ENCODE measurements at regions of chr1 and their contacts with region 1.

Region 1: GRCh38 chr1:35882945-35883634 is at the start of gene AGO1:
- DNase-seq: peak; percentile 63
- ATAC-seq: peak; percentile 93
- H3K4me3 ChIP-seq: peak within 1 kb of the TSS; percentile 97
- H3K27ac ChIP-seq: peak within 1 kb of the TSS; percentile 65
- H3K4me1 ChIP-seq: peaks cover 14% of the 10 kb centered on the region
- H3K27me3 ChIP-seq: no peaks in the 10 kb centered on the region
- CTCF ChIP-seq: peak; percentile 95 to 98 (median 97); a peak in 5 of 6 replicates
- EP300 ChIP-seq: no peak
- POLR2A ChIP-seq: peak; percentile 83
- RAD21 ChIP-seq: peak; percentile 51
- polyA plus RNA-seq, gene AGO1: 1.8 to 3.3 TPM

Region 2: GRCh38 chr1:35930593-35931445 is 47.7 kb after region 1 on chr1 and contains the start of gene AGO3:
- CTCF ChIA-PET with region 1: interaction called, 4 read pairs
- POLR2A ChIA-PET with region 1: interaction called, 6 read pairs
- RAD21 ChIA-PET with region 1: interaction called, 6 read pairs
- SMC1A ChIA-PET with region 1: interaction called, 5 read pairs
- in situ Hi-C with region 1: no loop called
- intact Hi-C with region 1: loop called (anchors 2 kb)
- DNase-seq: peak; percentile 60
- ATAC-seq: peak; percentile 91
- H3K4me3 ChIP-seq: peak within 1 kb of the TSS; percentile 97
- H3K27ac ChIP-seq: peak within 1 kb of the TSS; percentile 78
- H3K4me1 ChIP-seq: peaks cover 5% of the 10 kb centered on the region
- H3K27me3 ChIP-seq: no peaks in the 10 kb centered on the region
- CTCF ChIP-seq: no peak
- EP300 ChIP-seq: no peak
- POLR2A ChIP-seq: peak; percentile 84
- RAD21 ChIP-seq: no peak
- polyA plus RNA-seq, gene AGO3: 3.9 to 4.2 TPM

Region 3: DNA sequence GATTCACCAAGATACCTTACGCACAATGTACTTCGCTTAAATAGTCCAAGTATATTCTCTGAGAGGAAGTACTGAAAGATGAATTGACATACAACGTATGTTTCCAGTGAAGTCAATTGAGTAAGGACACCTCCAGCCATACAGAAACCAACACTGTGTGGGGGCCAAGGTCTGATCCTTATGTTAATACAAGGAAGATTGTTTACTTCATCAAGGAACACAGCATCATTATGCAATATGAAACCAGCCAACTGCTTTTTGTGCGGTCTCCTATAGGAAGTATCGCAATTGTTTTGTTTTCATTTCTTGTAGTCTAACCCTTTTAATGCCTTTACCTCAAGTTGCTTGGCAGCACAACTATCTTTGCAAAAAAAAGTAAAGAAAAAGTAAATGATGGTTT is 172.6 kb after region 1 on chr1:
- CTCF ChIA-PET with region 1: no interaction called
- POLR2A ChIA-PET with region 1: no interaction called
- RAD21 ChIA-PET with region 1: no interaction called
- SMC1A ChIA-PET with region 1: no interaction called
- in situ Hi-C with region 1: no loop called
- intact Hi-C with region 1: no loop called
- DNase-seq: no peak
- ATAC-seq: no peak
- H3K4me3 ChIP-seq: no peak overlapping the region
- H3K27ac ChIP-seq: no peak overlapping the region
- H3K4me1 ChIP-seq: no peaks in the 10 kb centered on the region
- H3K27me3 ChIP-seq: no peaks in the 10 kb centered on the region
- CTCF ChIP-seq: no peak
- EP300 ChIP-seq: no peak
- POLR2A ChIP-seq: no peak
- RAD21 ChIP-seq: no peak

Measured in GM12878 (cell line).